ENCODE measurements at regions of chr14 and their contacts with region 1.

Region 1: GRCh38 chr14:21437063-21437901 is 18.6 kb downstream of the CHD8 start:
- DNase-seq: peak; percentile 95 to 100
- H3K4me3 ChIP-seq: peak overlapping the region; percentile 48 to 76 (median 67)
- H3K27ac ChIP-seq: peak overlapping the region; percentile 73
- H3K4me1 ChIP-seq: peaks cover 0 to 5% (median 1%) of the 10 kb centered on the region in 4 experiments; a peak in 4 of 7 replicates
- H3K27me3 ChIP-seq: no peaks in the 10 kb centered on the region
- CTCF ChIP-seq: no peak
- EP300 ChIP-seq: 0 out of 3 replicates have a peak, but pooled peaks of 1 of the 2 experiments have one; percentile 10
- POLR2A ChIP-seq: peak; percentile 54 to 79
- RAD21 ChIP-seq: no peak; a peak in 1 of 4 replicates

Region 2: GRCh38 chr14:21383848-21384493 is 53.3 kb before region 1 on chr14 and contains the start of gene SUPT16H:
- CTCF ChIA-PET with region 1: interaction called, 5 read pairs
- POLR2A ChIA-PET with region 1: interaction called, 10 read pairs
- DNase-seq: peak; percentile 92
- H3K4me3 ChIP-seq: peak within 1 kb of the TSS; percentile 98 to 100 (median 99)
- H3K27ac ChIP-seq: peak within 1 kb of the TSS; percentile 94
- H3K4me1 ChIP-seq: peaks cover 0 to 3% (median 0%) of the 10 kb centered on the region in 4 experiments; a peak in 3 of 7 replicates
- H3K27me3 ChIP-seq: no peaks in the 10 kb centered on the region
- CTCF ChIP-seq: no peak
- EP300 ChIP-seq: peak in 1 of 2 experiments; percentile 7; a peak in 1 of 3 replicates
- POLR2A ChIP-seq: peak; percentile 74 to 94
- RAD21 ChIP-seq: no peak
- total RNA-seq, gene SUPT16H: 201 and 209 TPM in 2 replicates

Region 3: GRCh38 chr14:21455911-21456667 is 18.8 kb after region 1 on chr14 and contains the start of gene CHD8:
- CTCF ChIA-PET with region 1: interaction called, 11 read pairs
- POLR2A ChIA-PET with region 1: interaction called, 62 read pairs
- DNase-seq: peak; percentile 98 to 100
- H3K4me3 ChIP-seq: peak within 1 kb of the TSS; percentile 87 to 98 (median 94)
- H3K27ac ChIP-seq: peak within 1 kb of the TSS; percentile 90
- H3K4me1 ChIP-seq: peaks cover 0 to 4% (median 1%) of the 10 kb centered on the region in 4 experiments; a peak in 3 of 7 replicates
- H3K27me3 ChIP-seq: no peaks in the 10 kb centered on the region
- CTCF ChIP-seq: peak; percentile 46 to 74 (median 67)
- EP300 ChIP-seq: no peak
- POLR2A ChIP-seq: peak; percentile 79 to 99
- RAD21 ChIP-seq: peak; percentile 44 to 52
- total RNA-seq, gene CHD8: 140 TPM in 2 replicates

Region 4: DNA sequence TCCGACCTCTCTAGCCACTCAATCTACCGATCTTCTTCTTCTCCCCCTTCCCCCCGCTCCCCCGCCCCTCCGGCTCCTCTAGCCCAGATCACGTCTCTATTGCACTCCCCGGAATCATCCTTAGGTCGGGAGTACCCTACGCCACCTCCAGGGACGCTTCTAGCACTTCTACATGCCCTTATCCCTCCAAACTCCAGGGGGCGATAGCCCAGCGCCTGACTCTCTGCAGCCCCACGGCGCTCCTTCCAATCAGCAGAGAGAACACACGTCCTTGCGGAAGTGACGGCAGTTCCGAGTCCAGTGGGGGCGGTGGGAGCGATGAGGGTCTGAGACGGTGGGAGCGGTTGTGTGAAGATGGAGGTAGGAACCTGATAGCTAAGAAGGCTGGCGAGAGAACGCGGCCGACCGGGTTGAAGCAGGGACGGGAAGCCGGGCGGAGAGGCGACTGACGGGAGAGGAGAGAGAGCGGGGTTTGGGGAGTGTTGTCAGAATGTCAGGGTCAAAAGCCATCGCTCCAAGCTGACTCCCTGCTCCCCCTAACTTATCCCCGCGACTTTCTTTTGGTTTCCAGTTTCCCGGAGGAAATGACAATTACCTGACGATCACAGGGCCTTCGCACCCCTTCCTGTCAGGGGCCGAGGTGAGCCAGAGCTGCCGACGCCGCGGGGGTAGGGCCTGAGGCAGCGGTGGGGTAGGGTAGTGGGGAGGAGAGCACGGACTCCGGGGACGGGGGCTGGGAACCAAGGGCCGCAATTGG is 39.8 kb after region 1 on chr14 and contains the starts of genes RAB2B and TOX4:
- CTCF ChIA-PET with region 1: interaction called, 5 read pairs
- POLR2A ChIA-PET with region 1: interaction called, 14 read pairs
- DNase-seq: peak; percentile 95 to 96
- H3K4me3 ChIP-seq: peak within 1 kb of the TSS; percentile 88 to 100 (median 96)
- H3K27ac ChIP-seq: peak within 1 kb of the TSS; percentile 36
- H3K4me1 ChIP-seq: no peaks in the 10 kb centered on the region; a peak in 1 of 7 replicates
- H3K27me3 ChIP-seq: no peaks in the 10 kb centered on the region
- CTCF ChIP-seq: peak; percentile 83 to 99 (median 99)
- EP300 ChIP-seq: peak in 1 of 2 experiments; percentile 66; a peak in 2 of 3 replicates
- POLR2A ChIP-seq: peak in 1 of 2 experiments; percentile 71; a peak in 2 of 3 replicates
- RAD21 ChIP-seq: peak; percentile 41 to 53; a peak in 3 of 4 replicates
- total RNA-seq, gene RAB2B: 26.1 and 27.6 TPM in 2 replicates
- total RNA-seq, gene TOX4: 49.5 and 58.3 TPM in 2 replicates

Region 5: GRCh38 chr14:21525962-21526671 is 88.8 kb after region 1 on chr14 and contains the start of gene SALL2:
- CTCF ChIA-PET with region 1: interaction called, 3 read pairs
- POLR2A ChIA-PET with region 1: interaction called, 21 read pairs
- DNase-seq: peak; percentile 93 to 97
- H3K4me3 ChIP-seq: peak within 1 kb of the TSS; percentile 50 to 82 (median 71)
- H3K27ac ChIP-seq: peak within 1 kb of the TSS; percentile 90
- H3K4me1 ChIP-seq: peaks cover 14 to 69% (median 42%) of the 10 kb centered on the region in 4 experiments
- H3K27me3 ChIP-seq: no peaks in the 10 kb centered on the region
- CTCF ChIP-seq: no peak
- EP300 ChIP-seq: peak in 1 of 2 experiments; percentile 87; a peak in 1 of 3 replicates
- POLR2A ChIP-seq: peak; percentile 36 to 85
- RAD21 ChIP-seq: peak in 1 of 2 experiments; percentile 16; a peak in 1 of 4 replicates
- total RNA-seq, gene SALL2: 346 and 360 TPM in 2 replicates

Measured in H1 (cell line).